ENCODE measurements at regions of chr6 and their contacts with region 1.

Region 1: GRCh38 chr6:2209226-2209809 is 36.1 kb downstream of the GMDS start:
- DNase-seq: peak; percentile 50 to 76
- H3K4me3 ChIP-seq: no peak overlapping the region
- H3K27ac ChIP-seq: no peak overlapping the region
- H3K4me1 ChIP-seq: peaks cover 0 to 3% (median 1%) of the 10 kb centered on the region in 4 experiments; a peak in 2 of 7 replicates
- H3K27me3 ChIP-seq: no peaks in the 10 kb centered on the region
- CTCF ChIP-seq: peak; percentile 88 to 94 (median 92)
- EP300 ChIP-seq: no peak
- POLR2A ChIP-seq: no peak
- RAD21 ChIP-seq: peak; percentile 78 to 86

Region 2: DNA sequence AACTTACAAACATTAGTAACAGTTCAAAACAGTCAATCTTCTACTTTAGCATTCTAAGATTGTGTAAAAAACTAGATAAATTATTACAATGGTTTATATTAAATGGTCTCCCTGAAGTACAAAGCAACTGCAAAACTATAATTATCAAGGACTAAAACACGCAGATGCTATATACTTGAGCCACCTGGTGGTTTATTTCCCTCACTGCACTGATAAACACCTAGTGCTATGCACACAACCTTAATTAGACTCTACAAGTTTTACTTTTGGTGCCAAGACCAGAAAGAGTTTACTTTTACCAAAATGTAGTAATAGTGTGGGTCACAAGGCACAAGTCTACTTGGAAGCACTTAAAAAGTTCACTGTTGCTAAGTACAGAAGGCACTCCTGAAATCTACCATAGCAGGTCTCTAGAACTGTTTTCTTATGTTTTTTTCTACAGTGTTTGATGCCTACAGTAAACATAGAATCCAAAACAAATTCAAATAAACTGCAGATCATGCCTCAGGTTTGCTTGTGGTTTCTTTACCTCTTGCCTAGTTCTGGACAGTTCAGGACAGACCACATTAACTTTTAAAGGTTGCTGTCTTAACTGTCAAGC is 13.1 kb before region 1 on chr6:
- CTCF ChIA-PET with region 1: interaction called, 41 read pairs
- POLR2A ChIA-PET with region 1: interaction called, 3 read pairs
- DNase-seq: no peak
- H3K4me3 ChIP-seq: no peak overlapping the region
- H3K27ac ChIP-seq: no peak overlapping the region
- H3K4me1 ChIP-seq: peaks cover 0 to 3% (median 0%) of the 10 kb centered on the region in 4 experiments; a peak in 2 of 7 replicates
- H3K27me3 ChIP-seq: no peaks in the 10 kb centered on the region
- CTCF ChIP-seq: peak in 2 of 3 experiments; percentile 51 to 64; a peak in 2 of 4 replicates
- EP300 ChIP-seq: no peak
- POLR2A ChIP-seq: no peak
- RAD21 ChIP-seq: peak; percentile 61 to 65

Region 3: GRCh38 chr6:2242311-2242710 is 33.0 kb after region 1 on chr6:
- CTCF ChIA-PET with region 1: interaction called, 10 read pairs
- POLR2A ChIA-PET with region 1: no interaction called
- DNase-seq: no peak
- H3K4me3 ChIP-seq: no peak overlapping the region
- H3K27ac ChIP-seq: no peak overlapping the region
- H3K4me1 ChIP-seq: peaks cover 5 to 22% (median 10%) of the 10 kb centered on the region in 4 experiments
- H3K27me3 ChIP-seq: no peaks in the 10 kb centered on the region
- CTCF ChIP-seq: no peak
- EP300 ChIP-seq: no peak
- POLR2A ChIP-seq: no peak
- RAD21 ChIP-seq: no peak

Region 4: DNA sequence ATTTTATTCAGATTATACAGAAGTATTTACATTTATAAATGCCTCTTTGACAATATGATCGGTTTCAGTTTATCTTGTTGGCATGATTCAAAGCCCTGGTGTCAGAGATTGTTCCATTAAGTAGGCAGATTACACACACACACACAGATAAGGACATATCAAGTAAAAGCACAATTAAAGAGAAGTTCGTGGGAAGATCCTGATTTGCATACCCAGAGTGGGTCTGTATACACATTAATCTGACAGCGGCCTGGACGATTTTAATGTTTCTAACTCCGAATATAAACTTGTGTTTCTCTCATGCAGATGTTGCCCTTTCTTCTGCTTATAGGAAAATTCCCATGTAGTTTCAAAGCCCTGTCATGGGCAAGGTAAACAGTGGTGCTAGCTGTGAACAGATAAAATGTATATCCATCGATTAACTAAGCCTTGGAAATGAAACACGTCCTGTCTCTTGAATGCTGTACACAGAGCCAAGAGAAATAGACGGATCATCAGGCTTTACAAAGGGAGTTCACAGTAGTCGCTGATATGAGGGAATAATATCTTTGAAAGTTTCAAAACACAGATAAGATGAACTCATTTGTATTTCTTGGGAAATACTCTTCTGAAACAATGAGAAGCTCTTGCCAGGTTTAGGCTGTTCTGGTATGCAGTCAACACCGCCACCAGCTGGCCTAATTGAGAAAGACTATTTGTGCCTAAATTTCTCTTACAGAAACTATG is 144.3 kb after region 1 on chr6:
- CTCF ChIA-PET with region 1: interaction called, 37 read pairs
- POLR2A ChIA-PET with region 1: interaction called, 3 read pairs
- DNase-seq: peak; percentile 10 to 76
- H3K4me3 ChIP-seq: no peak overlapping the region
- H3K27ac ChIP-seq: no peak overlapping the region
- H3K4me1 ChIP-seq: no peaks in the 10 kb centered on the region
- H3K27me3 ChIP-seq: no peaks in the 10 kb centered on the region
- CTCF ChIP-seq: peak in 2 of 3 experiments; percentile 72 to 80; a peak in 3 of 4 replicates
- EP300 ChIP-seq: no peak
- POLR2A ChIP-seq: no peak
- RAD21 ChIP-seq: peak; percentile 93 to 95

Measured in H1 (cell line).